Head of caudate nucleus (tissue), 42 donors: ENCODE measurements at regions of chr11 and their contacts with region 1.

Region 1: DNA sequence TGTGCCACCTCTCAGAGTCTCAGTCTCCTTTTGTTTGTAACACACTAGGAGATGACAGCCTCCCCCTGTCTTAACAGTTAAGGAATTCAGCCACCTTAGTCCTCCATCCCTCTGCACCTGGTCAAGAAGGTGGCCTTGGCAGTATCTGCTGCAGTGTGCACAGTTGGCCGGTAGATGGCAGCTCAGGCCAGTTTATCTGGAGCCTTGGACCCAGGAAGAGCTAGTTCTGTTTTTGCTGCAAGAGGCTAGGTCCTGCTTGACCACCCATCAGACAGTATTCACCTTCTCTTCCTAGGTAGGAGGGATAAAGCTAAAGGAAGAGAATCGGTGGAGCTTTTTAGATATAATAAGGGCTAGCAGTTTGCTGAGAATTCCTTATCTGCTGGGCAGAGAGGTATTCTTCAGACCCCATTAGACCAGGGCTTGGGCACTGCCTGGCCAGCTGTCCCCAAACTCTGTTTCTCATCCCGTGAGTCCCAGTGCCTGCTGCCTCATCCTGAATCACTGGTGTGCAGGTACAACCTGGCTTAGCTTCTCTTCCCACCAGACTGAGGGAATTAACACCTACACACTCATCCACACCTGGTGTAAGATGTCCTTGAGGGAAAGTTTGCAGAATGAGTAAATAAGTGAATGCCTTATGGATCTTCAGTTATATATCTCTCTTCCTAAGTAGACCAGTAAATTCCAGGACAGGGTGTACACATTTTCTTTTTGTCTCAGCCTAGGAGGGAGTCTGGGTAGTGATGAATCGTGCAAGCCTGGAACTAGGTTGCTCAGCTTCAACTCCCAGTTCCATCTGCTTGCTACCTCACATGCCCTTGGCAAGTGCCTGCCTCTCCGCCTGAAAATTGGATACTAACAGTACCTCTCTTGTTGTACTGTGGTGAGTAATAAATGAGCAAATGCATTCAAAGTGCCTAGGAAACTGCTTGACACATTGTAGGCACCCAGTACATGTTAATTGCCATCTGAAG is 70.8 kb upstream of the NARS2 start:
- DNase-seq: peak; percentile 50 to 91 (median 78)

Region 2: DNA sequence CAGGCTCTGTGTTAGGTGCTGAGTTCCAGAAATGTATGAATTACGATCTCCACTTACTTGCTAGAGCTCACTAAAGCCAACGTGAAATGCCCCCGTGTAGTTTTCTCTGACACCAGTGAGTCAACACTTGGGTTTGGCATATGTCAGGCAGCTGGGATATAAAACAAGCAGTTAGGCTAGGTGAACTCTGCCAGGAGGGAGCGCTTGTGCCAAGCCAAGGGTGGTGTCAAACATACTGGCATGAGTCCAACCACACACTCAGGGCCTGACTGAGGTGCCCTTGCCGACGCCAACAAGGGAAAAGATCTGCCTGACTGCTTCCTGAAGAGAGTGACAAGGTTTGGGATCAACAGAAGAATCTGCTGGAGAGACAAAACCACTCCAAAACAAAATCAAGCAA is 96.9 kb after region 1 on chr11:
- intact Hi-C with region 1: no loop called
- DNase-seq: peak in 23 of 42 donors; percentile 3 to 77 (median 22)

Region 3: GRCh38 chr11:79160791-79161403 is 515.4 kb after region 1 on chr11:
- intact Hi-C with region 1: loop called (anchors 10 kb)
- DNase-seq: peak in 5 of 42 donors; percentile 8 to 36 (median 23)